B cell (primary cell): ENCODE measurements at regions of chr6 and their contacts with region 1.

Region 1: DNA sequence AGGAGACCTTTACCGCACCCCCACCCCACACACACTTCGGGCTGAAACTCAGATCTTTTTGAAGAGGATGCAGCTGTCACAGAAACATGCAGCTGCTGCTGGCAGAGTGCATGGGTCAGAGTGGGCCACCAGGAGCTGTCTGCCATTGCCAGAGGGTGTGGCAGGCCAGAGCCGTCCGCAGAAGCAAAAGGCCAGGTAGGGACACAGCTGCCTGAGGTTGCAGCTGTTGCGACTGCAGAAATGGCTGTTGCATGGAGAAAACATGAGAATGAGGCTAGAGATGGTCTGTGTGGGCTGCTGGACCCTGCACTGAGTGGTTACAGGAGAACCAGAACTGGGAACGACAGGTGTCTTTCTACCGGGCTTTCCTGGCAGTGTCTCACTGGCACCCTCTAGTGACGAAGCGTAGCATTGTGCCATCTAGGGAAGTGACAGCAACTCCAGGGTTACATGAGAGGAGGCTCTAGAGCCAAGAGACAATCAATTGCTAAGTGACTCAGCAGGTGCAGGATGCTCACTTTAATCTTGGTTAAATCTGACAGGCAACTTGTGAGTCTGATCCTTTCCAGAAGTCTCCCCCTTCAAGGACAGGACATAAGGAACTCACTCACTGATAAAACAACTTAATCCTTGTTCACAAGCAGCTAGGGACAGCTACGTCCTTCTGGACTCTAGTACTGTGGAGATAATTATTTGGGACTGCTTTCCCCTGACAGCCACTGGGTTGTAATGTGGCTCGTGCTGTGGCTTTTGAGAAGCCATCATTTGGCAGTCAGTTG is 29.1 kb upstream of the SERPINB9 start:
- DNase-seq: peak; percentile 90
- ATAC-seq: peak; percentile 98
- H3K4me3 ChIP-seq: peak overlapping the region in 1 of 5 experiments; percentile 23
- H3K4me3 Mint-ChIP-seq: peak overlapping the region; percentile 69
- H3K27ac ChIP-seq: no peak overlapping the region
- H3K27ac Mint-ChIP-seq: peak overlapping the region; percentile 57
- H3K4me1 ChIP-seq: peaks cover 13 to 17% of the 10 kb centered on the region in 2 donors
- H3K4me1 Mint-ChIP-seq: peaks cover 20% of the 10 kb centered on the region
- H3K27me3 ChIP-seq: no peaks in the 10 kb centered on the region
- H3K27me3 Mint-ChIP-seq: no peaks in the 10 kb centered on the region
- CTCF ChIP-seq: peak; percentile 98

Region 2: DNA sequence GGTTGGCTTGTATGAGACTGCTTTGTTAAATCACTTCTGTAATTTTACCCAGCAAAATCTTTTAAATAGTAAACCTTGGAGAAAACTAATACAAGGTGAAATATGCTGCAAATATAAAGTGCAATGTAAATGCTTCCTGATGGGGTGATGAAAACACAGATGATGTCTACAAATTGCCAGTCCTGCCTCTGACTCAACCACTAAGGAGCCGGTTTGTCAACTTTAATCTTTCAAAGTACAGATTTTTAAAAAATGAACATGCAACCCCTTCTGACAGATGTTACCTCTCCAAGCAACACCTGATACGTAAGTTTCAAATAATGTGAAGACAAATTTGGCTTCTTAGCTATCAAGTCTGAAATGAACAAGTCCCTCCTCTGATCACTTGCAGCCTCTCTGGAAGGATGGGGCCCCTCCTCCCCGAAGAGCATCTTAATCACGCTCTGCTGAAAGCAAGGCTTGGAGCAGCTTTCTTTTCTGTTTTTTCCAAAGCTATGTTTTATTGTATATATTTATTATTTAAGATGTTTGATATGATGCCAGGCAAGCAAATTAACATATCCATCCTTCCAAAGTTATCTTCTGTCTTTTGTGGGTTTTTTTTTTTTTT is 377.4 kb before region 1 on chr6:
- CTCF ChIA-PET with region 1: no interaction called
- POLR2A ChIA-PET with region 1: no interaction called
- intact Hi-C with region 1: no loop called
- DNase-seq: no peak
- ATAC-seq: no peak
- H3K4me3 ChIP-seq: no peak overlapping the region
- H3K4me3 Mint-ChIP-seq: no peak overlapping the region
- H3K27ac ChIP-seq: no peak overlapping the region
- H3K27ac Mint-ChIP-seq: no peak overlapping the region
- H3K4me1 ChIP-seq: no peaks in the 10 kb centered on the region
- H3K4me1 Mint-ChIP-seq: no peaks in the 10 kb centered on the region
- H3K27me3 ChIP-seq: peaks cover 0 to 5% (median 2%) of the 10 kb centered on the region in 4 experiments
- H3K27me3 Mint-ChIP-seq: peaks cover 39% of the 10 kb centered on the region
- CTCF ChIP-seq: no peak

Region 3: GRCh38 chr6:2765166-2765895 is 166.8 kb before region 1 on chr6 and contains the start of gene WRNIP1:
- CTCF ChIA-PET with region 1: interaction called, 24 read pairs
- POLR2A ChIA-PET with region 1: no interaction called
- intact Hi-C with region 1: no loop called
- DNase-seq: peak; percentile 98
- ATAC-seq: peak; percentile 87
- H3K4me3 ChIP-seq: peak within 1 kb of the TSS; percentile 66 to 90 (median 77)
- H3K4me3 Mint-ChIP-seq: peak within 1 kb of the TSS; percentile 98
- H3K27ac ChIP-seq: peak within 1 kb of the TSS; percentile 96 to 97
- H3K27ac Mint-ChIP-seq: peak within 1 kb of the TSS; percentile 100
- H3K4me1 ChIP-seq: peaks cover 25 to 33% of the 10 kb centered on the region in 2 donors
- H3K4me1 Mint-ChIP-seq: peaks cover 43% of the 10 kb centered on the region
- H3K27me3 ChIP-seq: no peaks in the 10 kb centered on the region
- H3K27me3 Mint-ChIP-seq: no peaks in the 10 kb centered on the region
- CTCF ChIP-seq: peak; percentile 60
- total RNA-seq, gene WRNIP1: 32.1 and 35.2 TPM in 2 replicates

Region 4: GRCh38 chr6:2841264-2842138 is 90.7 kb before region 1 on chr6 and contains the start of gene SERPINB1:
- CTCF ChIA-PET with region 1: interaction called, 383 read pairs
- POLR2A ChIA-PET with region 1: interaction called, 6 read pairs
- intact Hi-C with region 1: loop called (anchors 1 kb)
- DNase-seq: peak; percentile 86
- ATAC-seq: peak; percentile 79
- H3K4me3 ChIP-seq: peak within 1 kb of the TSS; percentile 55 to 85 (median 72)
- H3K4me3 Mint-ChIP-seq: peak within 1 kb of the TSS; percentile 90
- H3K27ac ChIP-seq: peak within 1 kb of the TSS; percentile 61 to 87
- H3K27ac Mint-ChIP-seq: peak within 1 kb of the TSS; percentile 96
- H3K4me1 ChIP-seq: peaks cover 35 to 45% of the 10 kb centered on the region in 2 donors
- H3K4me1 Mint-ChIP-seq: peaks cover 50% of the 10 kb centered on the region
- H3K27me3 ChIP-seq: no peaks in the 10 kb centered on the region
- H3K27me3 Mint-ChIP-seq: no peaks in the 10 kb centered on the region
- CTCF ChIP-seq: no peak
- total RNA-seq, gene SERPINB1: 47.4 and 52.5 TPM in 2 replicates

Region 5: GRCh38 chr6:2853761-2854395 is 78.3 kb before region 1 on chr6:
- CTCF ChIA-PET with region 1: interaction called, 383 read pairs
- POLR2A ChIA-PET with region 1: interaction called, 7 read pairs
- intact Hi-C with region 1: no loop called
- DNase-seq: peak; percentile 85
- ATAC-seq: peak; percentile 39
- H3K4me3 ChIP-seq: peak overlapping the region in 3 of 5 experiments; percentile 31 to 52 (median 31)
- H3K4me3 Mint-ChIP-seq: peak overlapping the region; percentile 74
- H3K27ac ChIP-seq: peak overlapping the region; percentile 73 to 84
- H3K27ac Mint-ChIP-seq: peak overlapping the region; percentile 98
- H3K4me1 ChIP-seq: peaks cover 54 to 62% of the 10 kb centered on the region in 2 donors
- H3K4me1 Mint-ChIP-seq: peaks cover 68% of the 10 kb centered on the region
- H3K27me3 ChIP-seq: no peaks in the 10 kb centered on the region
- H3K27me3 Mint-ChIP-seq: no peaks in the 10 kb centered on the region
- CTCF ChIP-seq: peak; percentile 69

Region 6: GRCh38 chr6:2891768-2892170 is 40.4 kb before region 1 on chr6:
- CTCF ChIA-PET with region 1: interaction called, 18 read pairs
- POLR2A ChIA-PET with region 1: interaction called, 13 read pairs
- intact Hi-C with region 1: no loop called
- DNase-seq: peak; percentile 87
- ATAC-seq: peak; percentile 90
- H3K4me3 ChIP-seq: peak overlapping the region in 4 of 5 experiments; percentile 5 to 34 (median 16)
- H3K4me3 Mint-ChIP-seq: peak overlapping the region; percentile 86
- H3K27ac ChIP-seq: peak overlapping the region; percentile 59 to 76
- H3K27ac Mint-ChIP-seq: peak overlapping the region; percentile 94
- H3K4me1 ChIP-seq: peaks cover 30 to 32% of the 10 kb centered on the region in 2 donors
- H3K4me1 Mint-ChIP-seq: peaks cover 59% of the 10 kb centered on the region
- H3K27me3 ChIP-seq: no peaks in the 10 kb centered on the region
- H3K27me3 Mint-ChIP-seq: no peaks in the 10 kb centered on the region
- CTCF ChIP-seq: no peak

Region 7: GRCh38 chr6:2911171-2911570 is 21.0 kb before region 1 on chr6:
- CTCF ChIA-PET with region 1: interaction called, 49 read pairs
- POLR2A ChIA-PET with region 1: no interaction called
- intact Hi-C with region 1: loop called (anchors 1 kb)
- DNase-seq: peak; percentile 78
- ATAC-seq: peak; percentile 83
- H3K4me3 ChIP-seq: no peak overlapping the region
- H3K4me3 Mint-ChIP-seq: peak overlapping the region; percentile 64
- H3K27ac ChIP-seq: peak overlapping the region; percentile 54 to 62
- H3K27ac Mint-ChIP-seq: peak overlapping the region; percentile 85
- H3K4me1 ChIP-seq: peaks cover 24 to 27% of the 10 kb centered on the region in 2 donors
- H3K4me1 Mint-ChIP-seq: peaks cover 36% of the 10 kb centered on the region
- H3K27me3 ChIP-seq: no peaks in the 10 kb centered on the region
- H3K27me3 Mint-ChIP-seq: no peaks in the 10 kb centered on the region
- CTCF ChIP-seq: no peak

Region 8: DNA sequence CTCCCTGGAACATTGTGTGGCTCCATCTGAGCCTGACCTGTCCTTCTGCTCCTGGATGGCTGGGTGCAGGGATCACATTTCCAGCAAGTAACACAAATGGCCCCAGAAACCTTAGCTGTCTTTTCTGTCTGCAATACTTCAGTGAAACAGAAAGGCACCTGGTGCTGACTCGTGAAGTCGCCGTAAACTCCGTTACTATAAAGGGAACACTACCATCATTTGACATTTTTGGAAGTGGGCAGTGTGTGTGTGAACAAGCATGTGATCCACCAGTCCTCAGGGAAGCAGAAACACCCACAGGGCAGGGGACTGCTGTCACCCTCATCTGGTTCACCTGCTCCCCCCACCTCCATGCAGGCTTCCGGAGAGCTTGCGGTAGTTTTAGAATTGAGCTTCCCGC is 15.3 kb after region 1 on chr6:
- CTCF ChIA-PET with region 1: interaction called, 28 read pairs
- POLR2A ChIA-PET with region 1: interaction called, 3 read pairs
- intact Hi-C with region 1: no loop called
- DNase-seq: no peak
- ATAC-seq: no peak
- H3K4me3 ChIP-seq: no peak overlapping the region
- H3K4me3 Mint-ChIP-seq: peak overlapping the region; percentile 4
- H3K27ac ChIP-seq: no peak overlapping the region
- H3K27ac Mint-ChIP-seq: peak overlapping the region; percentile 47
- H3K4me1 ChIP-seq: peaks cover 42 to 61% of the 10 kb centered on the region in 2 donors
- H3K4me1 Mint-ChIP-seq: peaks cover 57% of the 10 kb centered on the region
- H3K27me3 ChIP-seq: no peaks in the 10 kb centered on the region
- H3K27me3 Mint-ChIP-seq: no peaks in the 10 kb centered on the region
- CTCF ChIP-seq: no peak